Activated CD8-positive, alpha-beta T cell treated with anti-CD3 and anti-CD28 coated beads, Interleukin-2, amount 10 ng/mL, durations not matched to agents 7 days and 5 days (primary cell): ENCODE measurements at regions of chr3 and their contacts with region 1.

Region 1: GRCh38 chr3:71258116-71258515 is 325.4 kb downstream of the FOXP1 start:
- DNase-seq: no peak
- ATAC-seq: no peak
- H3K4me3 Mint-ChIP-seq: no peak overlapping the region
- H3K27ac Mint-ChIP-seq: peak overlapping the region; percentile 23
- H3K4me1 Mint-ChIP-seq: peaks cover 28% of the 10 kb centered on the region
- H3K27me3 Mint-ChIP-seq: no peaks in the 10 kb centered on the region

Region 2: DNA sequence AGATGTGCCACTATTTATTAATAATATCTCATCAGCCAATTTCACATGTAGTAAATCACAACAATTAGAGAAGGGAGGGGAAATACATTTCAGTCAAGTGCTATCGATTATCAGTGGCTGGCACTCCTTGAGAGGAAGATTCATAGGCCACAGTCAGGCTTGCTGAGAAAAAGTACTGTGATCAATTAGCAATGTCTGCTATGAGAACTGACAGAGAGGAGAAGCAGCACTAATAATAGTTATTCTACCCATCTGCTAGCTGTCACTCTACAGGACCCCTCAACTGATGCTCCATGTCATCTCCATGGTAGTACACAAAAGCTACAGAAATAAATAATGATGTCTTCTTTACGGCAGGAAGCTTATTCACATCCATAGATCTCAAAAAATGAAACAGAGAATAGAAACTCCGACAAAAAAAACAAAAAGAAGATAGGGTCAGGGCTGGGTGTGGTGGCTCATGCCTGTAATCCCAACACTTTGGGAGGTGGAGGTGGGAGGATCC is 25.9 kb before region 1 on chr3:
- CTCF ChIA-PET with region 1: interaction called, 12 read pairs
- POLR2A ChIA-PET with region 1: no interaction called
- DNase-seq: no peak
- ATAC-seq: peak; percentile 26
- H3K4me3 Mint-ChIP-seq: no peak overlapping the region
- H3K27ac Mint-ChIP-seq: no peak overlapping the region
- H3K4me1 Mint-ChIP-seq: peaks cover 45% of the 10 kb centered on the region
- H3K27me3 Mint-ChIP-seq: no peaks in the 10 kb centered on the region

Region 3: GRCh38 chr3:71288269-71288930 is 30.3 kb after region 1 on chr3:
- CTCF ChIA-PET with region 1: no interaction called
- POLR2A ChIA-PET with region 1: no interaction called
- DNase-seq: no peak
- ATAC-seq: no peak
- H3K4me3 Mint-ChIP-seq: no peak overlapping the region
- H3K27ac Mint-ChIP-seq: no peak overlapping the region
- H3K4me1 Mint-ChIP-seq: peaks cover 13% of the 10 kb centered on the region
- H3K27me3 Mint-ChIP-seq: no peaks in the 10 kb centered on the region